K562 (cell line): ENCODE measurements at regions of chr15 and their contacts with region 1.

Region 1: DNA sequence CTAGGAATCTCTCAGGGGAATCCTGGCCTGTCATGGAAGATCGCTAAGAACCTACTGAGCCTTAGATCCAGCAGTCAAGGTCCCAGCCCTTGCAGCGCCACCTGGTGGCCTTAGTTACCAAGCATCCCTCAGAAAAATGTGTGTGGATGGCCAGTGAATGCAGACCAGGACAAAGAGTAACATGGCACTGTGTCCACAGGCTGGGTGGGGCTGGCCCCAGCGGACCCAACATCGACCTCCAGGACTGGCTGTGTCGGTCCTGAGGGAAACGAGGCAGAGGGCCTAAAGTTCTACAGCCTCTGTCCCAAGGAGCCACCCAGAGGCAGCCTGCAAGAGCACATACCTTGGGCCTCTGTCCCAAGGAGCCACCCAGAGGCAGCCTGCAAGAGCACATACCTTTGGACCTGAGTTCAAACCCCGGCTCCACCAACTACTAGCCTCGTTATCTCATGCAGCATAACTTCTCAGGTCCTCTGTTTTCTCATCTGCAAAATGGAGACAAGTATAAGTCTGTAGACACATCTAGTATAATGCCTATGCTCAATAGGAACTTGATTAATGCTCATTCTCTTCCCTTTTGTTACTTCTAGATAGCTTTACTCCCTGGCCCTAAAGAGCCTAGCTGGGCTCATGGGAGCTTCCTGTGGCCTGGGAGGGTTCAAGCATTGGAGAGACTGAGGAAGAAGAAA is 57.5 kb upstream of the HERC1 start:
- DNase-seq: peak; percentile 75 to 93 (median 80)
- ATAC-seq: peak; percentile 72
- H3K4me3 ChIP-seq: no peak overlapping the region
- H3K27ac ChIP-seq: peak overlapping the region; percentile 40; the same call in 2 of the 3 replicates
- H3K4me1 ChIP-seq: peaks cover 51 to 57% of the 10 kb centered on the region in 2 experiments
- H3K27me3 ChIP-seq: no peaks in the 10 kb centered on the region
- CTCF ChIP-seq: peak; percentile 82 to 97 (median 85)
- EP300 ChIP-seq: peak; percentile 7; the same call in 1 of the 2 replicates
- POLR2A ChIP-seq: no peak
- RAD21 ChIP-seq: peak; percentile 87 to 93

Region 2: DNA sequence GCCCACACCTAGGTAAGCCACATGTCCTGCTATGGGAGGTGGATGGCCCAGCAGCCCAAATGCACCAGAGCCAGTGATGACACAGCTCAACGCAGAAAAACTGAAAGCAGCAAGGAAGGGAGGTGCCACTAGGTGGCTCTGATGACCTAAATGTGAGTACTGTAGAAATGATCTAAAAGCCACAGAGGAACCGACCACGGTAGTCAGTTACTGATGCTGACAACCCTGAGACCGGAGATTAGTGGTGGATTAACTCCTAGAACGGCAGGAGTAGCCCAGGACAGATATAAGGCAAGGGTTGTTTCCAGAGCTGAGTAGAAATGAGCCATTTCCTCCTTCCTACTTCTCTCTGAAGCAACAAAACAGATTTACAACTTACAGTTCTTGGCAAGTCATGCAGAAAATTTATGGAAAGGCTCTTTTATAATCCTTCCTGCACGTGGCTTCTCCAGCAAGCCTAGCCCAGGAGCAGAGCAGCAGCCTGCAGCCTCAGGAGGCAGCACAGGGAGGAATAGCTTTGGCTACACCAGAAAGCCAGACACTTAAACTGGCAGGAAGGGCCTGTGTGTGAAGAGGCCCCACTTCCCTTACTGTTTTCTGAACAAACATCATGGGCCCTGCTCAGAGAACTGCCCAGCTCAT is 280.9 kb before region 1 on chr15:
- CTCF ChIA-PET with region 1: no interaction called
- POLR2A ChIA-PET with region 1: no interaction called
- in situ Hi-C with region 1: no loop called
- intact Hi-C with region 1: loop called (anchors 2 kb)
- DNase-seq: peak; percentile 70 to 84 (median 76)
- ATAC-seq: peak; percentile 97
- H3K4me3 ChIP-seq: no peak overlapping the region
- H3K27ac ChIP-seq: peak overlapping the region; percentile 57
- H3K4me1 ChIP-seq: peaks cover 0 to 11% of the 10 kb centered on the region in 2 experiments; a peak in 3 of 5 replicates
- H3K27me3 ChIP-seq: no peaks in the 10 kb centered on the region
- CTCF ChIP-seq: peak; percentile 78 to 90 (median 81)
- EP300 ChIP-seq: no peak
- POLR2A ChIP-seq: no peak
- RAD21 ChIP-seq: peak; percentile 67 to 86

Region 3: GRCh38 chr15:63826528-63826927 is 64.7 kb before region 1 on chr15:
- CTCF ChIA-PET with region 1: interaction called, 12 read pairs
- POLR2A ChIA-PET with region 1: interaction called, 3 read pairs
- in situ Hi-C with region 1: no loop called
- intact Hi-C with region 1: loop called (anchors 1 kb)
- DNase-seq: peak in 1 of 4 experiments; percentile 66
- ATAC-seq: peak; percentile 51; the same call in 1 of the 3 replicates
- H3K4me3 ChIP-seq: no peak overlapping the region
- H3K27ac ChIP-seq: peak overlapping the region; percentile 53; the same call in 1 of the 3 replicates
- H3K4me1 ChIP-seq: peaks cover 16 to 23% of the 10 kb centered on the region in 2 experiments
- H3K27me3 ChIP-seq: no peaks in the 10 kb centered on the region
- CTCF ChIP-seq: peak; percentile 17 to 53 (median 25); a peak in 3 of 6 replicates
- EP300 ChIP-seq: no peak
- POLR2A ChIP-seq: no peak
- RAD21 ChIP-seq: peak; percentile 41 to 47

Region 4: DNA sequence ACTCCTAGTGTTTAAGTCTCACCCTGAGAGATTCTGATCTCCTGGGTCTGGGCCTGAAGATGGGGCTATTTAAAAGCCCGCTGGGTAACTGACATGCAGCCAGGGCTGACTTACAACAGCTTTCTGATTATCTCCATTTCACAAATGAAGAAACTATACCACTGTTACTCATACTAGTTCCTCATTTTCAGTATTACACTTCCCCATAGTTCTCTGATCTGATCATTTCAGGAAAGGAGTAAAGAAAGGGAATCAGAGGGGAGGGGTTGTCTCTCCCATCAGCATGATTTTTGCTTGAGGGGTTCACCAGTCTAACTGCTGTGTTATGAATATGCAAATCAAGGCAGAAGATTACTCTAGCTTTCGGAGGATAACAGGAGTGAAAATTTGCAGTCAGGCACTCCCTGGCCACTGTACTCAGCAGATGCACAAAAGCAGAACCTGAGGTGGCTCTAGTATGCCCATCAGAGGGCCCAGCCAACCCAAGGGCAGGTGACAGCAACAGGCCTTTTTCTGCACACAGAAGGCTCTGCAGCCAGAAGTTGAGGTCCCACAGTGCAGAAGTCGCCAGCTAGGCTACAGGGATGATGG is 95.6 kb after region 1 on chr15:
- CTCF ChIA-PET with region 1: interaction called, 4 read pairs
- POLR2A ChIA-PET with region 1: interaction called, 5 read pairs
- in situ Hi-C with region 1: no loop called
- intact Hi-C with region 1: loop called (anchors 2 kb)
- DNase-seq: peak in 1 of 4 experiments; percentile 47
- ATAC-seq: peak; percentile 58
- H3K4me3 ChIP-seq: no peak overlapping the region
- H3K27ac ChIP-seq: peak overlapping the region; percentile 37; the same call in 1 of the 3 replicates
- H3K4me1 ChIP-seq: peaks cover 17 to 32% of the 10 kb centered on the region in 2 experiments
- H3K27me3 ChIP-seq: no peaks in the 10 kb centered on the region
- CTCF ChIP-seq: peak in 1 of 3 experiments; percentile 39; a peak in 2 of 6 replicates
- EP300 ChIP-seq: peak; percentile 59
- POLR2A ChIP-seq: no peak
- RAD21 ChIP-seq: peak in 1 of 2 experiments; percentile 24; a peak in 1 of 4 replicates